Dendritic cell treated with granulocyte-macrophage colony-stimulating factor and Interleukin-4, amounts not matched to agents 40 ng/mL and 50 ng/mL, for 4 days (primary cell): ENCODE measurements at regions of chr11 and their contacts with region 1.

Region 1: GRCh38 chr11:109939166-109939810 is 153.9 kb upstream of the ZC3H12C start:
- H3K4me3 Mint-ChIP-seq: no peak overlapping the region
- H3K27ac Mint-ChIP-seq: no peak overlapping the region
- H3K4me1 Mint-ChIP-seq: peaks cover 35% of the 10 kb centered on the region
- H3K27me3 Mint-ChIP-seq: no peaks in the 10 kb centered on the region

Region 2: GRCh38 chr11:109853156-109853776 is 86.0 kb before region 1 on chr11:
- intact Hi-C with region 1: loop called (anchors 2 kb)
- H3K4me3 Mint-ChIP-seq: no peak overlapping the region
- H3K27ac Mint-ChIP-seq: no peak overlapping the region
- H3K4me1 Mint-ChIP-seq: no peaks in the 10 kb centered on the region
- H3K27me3 Mint-ChIP-seq: no peaks in the 10 kb centered on the region